ENCODE measurements at regions of chr2 and their contacts with region 1.

Region 1: GRCh38 chr2:216651351-216651881 is 18.2 kb downstream of the IGFBP2 start:
- DNase-seq: no peak
- ATAC-seq: no peak
- H3K4me3 ChIP-seq: no peak overlapping the region
- H3K27ac ChIP-seq: no peak overlapping the region
- H3K4me1 ChIP-seq: no peaks in the 10 kb centered on the region
- H3K27me3 ChIP-seq: peaks cover 0 to 3% of the 10 kb centered on the region in 2 experiments; a peak in 1 of 4 replicates
- CTCF ChIP-seq: no peak
- EP300 ChIP-seq: no peak
- POLR2A ChIP-seq: no peak
- RAD21 ChIP-seq: no peak

Region 2: GRCh38 chr2:216666461-216667233 is 15.2 kb after region 1 on chr2:
- CTCF ChIA-PET with region 1: interaction called, 4 read pairs
- POLR2A ChIA-PET with region 1: interaction called, 3 read pairs
- RAD21 ChIA-PET with region 1: interaction called, 3 read pairs
- SMC1A ChIA-PET with region 1: interaction called, 13 read pairs
- in situ Hi-C with region 1: no loop called
- intact Hi-C with region 1: no loop called
- DNase-seq: peak; percentile 19
- ATAC-seq: peak; percentile 92
- H3K4me3 ChIP-seq: no peak overlapping the region
- H3K27ac ChIP-seq: no peak overlapping the region
- H3K4me1 ChIP-seq: no peaks in the 10 kb centered on the region
- H3K27me3 ChIP-seq: peaks cover 2 to 5% of the 10 kb centered on the region in 2 experiments
- CTCF ChIP-seq: peak; percentile 98 to 100 (median 98)
- EP300 ChIP-seq: no peak
- POLR2A ChIP-seq: no peak
- RAD21 ChIP-seq: peak; percentile 97

Region 3: GRCh38 chr2:216873573-216873972 is 222.2 kb after region 1 on chr2:
- CTCF ChIA-PET with region 1: no interaction called
- POLR2A ChIA-PET with region 1: no interaction called
- RAD21 ChIA-PET with region 1: no interaction called
- SMC1A ChIA-PET with region 1: no interaction called
- in situ Hi-C with region 1: no loop called
- intact Hi-C with region 1: no loop called
- DNase-seq: no peak
- ATAC-seq: no peak
- H3K4me3 ChIP-seq: no peak overlapping the region
- H3K27ac ChIP-seq: no peak overlapping the region
- H3K4me1 ChIP-seq: no peaks in the 10 kb centered on the region
- H3K27me3 ChIP-seq: no peaks in the 10 kb centered on the region; a peak in 1 of 4 replicates
- CTCF ChIP-seq: no peak
- EP300 ChIP-seq: no peak
- POLR2A ChIP-seq: no peak
- RAD21 ChIP-seq: no peak